ENCODE measurements at regions of chr7 and their contacts with region 1.

Region 1: DNA sequence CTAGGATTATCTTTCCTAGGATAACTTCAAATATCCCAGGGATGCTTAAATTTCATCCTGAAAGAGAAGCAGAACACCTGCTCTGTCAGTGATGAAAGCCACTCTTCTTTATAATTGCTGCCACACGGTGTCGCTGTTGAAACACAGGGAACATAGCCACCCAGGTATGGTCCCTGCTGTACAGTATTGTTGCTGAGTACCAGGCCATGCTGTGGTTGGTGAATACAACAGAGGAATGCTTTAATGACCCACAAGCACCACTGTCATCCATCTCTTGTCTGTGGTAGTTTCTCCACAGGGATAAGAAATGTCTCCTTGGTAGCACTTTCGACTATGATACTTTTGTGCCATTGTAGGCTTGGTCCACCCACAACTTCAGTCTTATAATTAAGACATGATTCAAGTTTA is 70.6 kb upstream of the STARD3NL start:
- DNase-seq: peak; percentile 64 to 83
- ATAC-seq: peak; percentile 84 to 90 (median 89)
- H3K4me3 ChIP-seq: no peak overlapping the region
- H3K4me3 Mint-ChIP-seq: no peak overlapping the region
- H3K27ac ChIP-seq: no peak overlapping the region
- H3K27ac Mint-ChIP-seq: no peak overlapping the region
- H3K4me1 ChIP-seq: no peaks in the 10 kb centered on the region
- H3K4me1 Mint-ChIP-seq: no peaks in the 10 kb centered on the region
- H3K27me3 ChIP-seq: no peaks in the 10 kb centered on the region
- H3K27me3 Mint-ChIP-seq: peaks cover 5 to 15% of the 10 kb centered on the region in 2 donors
- CTCF ChIP-seq: peak; percentile 87

Region 2: GRCh38 chr7:38160003-38160571 is 52.6 kb after region 1 on chr7:
- intact Hi-C with region 1: loop called (anchors 5 kb)
- DNase-seq: no peak
- ATAC-seq: no peak
- H3K4me3 ChIP-seq: no peak overlapping the region
- H3K4me3 Mint-ChIP-seq: no peak overlapping the region
- H3K27ac ChIP-seq: no peak overlapping the region
- H3K27ac Mint-ChIP-seq: no peak overlapping the region
- H3K4me1 ChIP-seq: no peaks in the 10 kb centered on the region
- H3K4me1 Mint-ChIP-seq: no peaks in the 10 kb centered on the region
- H3K27me3 ChIP-seq: no peaks in the 10 kb centered on the region
- H3K27me3 Mint-ChIP-seq: peaks cover 4 to 11% of the 10 kb centered on the region in 2 donors
- CTCF ChIP-seq: no peak

Region 3: DNA sequence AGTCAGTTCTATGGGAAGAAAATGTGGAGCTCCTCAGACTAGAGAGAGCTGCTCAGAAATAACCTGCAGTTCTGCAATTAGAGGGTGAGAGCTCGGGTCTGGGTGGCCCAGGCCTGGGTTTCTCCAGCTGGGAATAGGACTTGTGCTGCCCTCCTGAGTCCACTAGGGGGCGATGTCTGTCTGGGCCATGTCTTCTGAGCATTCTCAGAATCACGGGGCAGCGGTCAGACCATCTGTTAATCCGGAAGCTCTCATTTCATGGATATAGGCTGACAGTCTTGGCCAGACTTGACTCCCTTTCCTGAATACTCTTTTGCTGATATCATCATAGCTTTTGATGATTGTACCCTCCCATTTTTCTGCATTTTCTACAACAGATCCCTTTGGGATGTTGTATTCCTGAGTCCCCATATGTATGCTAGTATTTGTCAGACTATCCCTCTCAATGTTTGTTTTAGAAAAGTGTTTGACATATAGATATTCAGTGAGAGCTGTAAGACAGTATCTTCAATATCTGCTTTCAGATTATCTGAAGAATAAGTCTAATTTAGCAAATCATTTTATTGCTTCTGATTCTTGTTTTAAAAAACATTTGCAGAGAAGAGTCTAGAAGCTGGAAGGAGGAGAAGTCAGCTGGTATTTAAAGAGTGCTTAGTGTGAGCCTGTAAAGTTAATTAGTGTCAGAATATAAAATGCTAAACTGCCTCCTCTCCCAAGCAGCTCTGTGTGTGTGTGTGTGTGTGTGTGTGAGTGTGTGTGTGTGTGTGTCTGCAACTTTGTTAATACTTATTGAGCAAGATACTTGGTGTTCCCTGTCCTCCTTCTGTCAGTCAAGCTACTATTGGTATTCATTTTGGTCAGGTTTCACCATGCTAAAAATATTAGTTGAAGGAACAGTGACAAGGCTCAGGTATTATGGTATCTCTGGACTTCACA is 108.5 kb after region 1 on chr7:
- intact Hi-C with region 1: loop called (anchors 2 kb)
- DNase-seq: peak; percentile 78 to 93
- ATAC-seq: peak; percentile 58 to 86 (median 76)
- H3K4me3 ChIP-seq: no peak overlapping the region
- H3K4me3 Mint-ChIP-seq: peak overlapping the region; percentile 80
- H3K27ac ChIP-seq: peak overlapping the region; percentile 67
- H3K27ac Mint-ChIP-seq: peak overlapping the region; percentile 95 to 96
- H3K4me1 ChIP-seq: peaks cover 48% of the 10 kb centered on the region
- H3K4me1 Mint-ChIP-seq: peaks cover 52 to 60% of the 10 kb centered on the region in 2 donors
- H3K27me3 ChIP-seq: no peaks in the 10 kb centered on the region
- H3K27me3 Mint-ChIP-seq: no peaks in the 10 kb centered on the region
- CTCF ChIP-seq: peak; percentile 93

Region 4: GRCh38 chr7:38369816-38370493 is 262.5 kb after region 1 on chr7:
- intact Hi-C with region 1: loop called (anchors 1 kb)
- DNase-seq: peak; percentile 77 to 90
- ATAC-seq: peak; percentile 85 to 89 (median 86)
- H3K4me3 ChIP-seq: no peak overlapping the region
- H3K4me3 Mint-ChIP-seq: peak overlapping the region; percentile 75
- H3K27ac ChIP-seq: peak overlapping the region; percentile 68
- H3K27ac Mint-ChIP-seq: peak overlapping the region; percentile 91 to 92
- H3K4me1 ChIP-seq: peaks cover 35% of the 10 kb centered on the region
- H3K4me1 Mint-ChIP-seq: peaks cover 52 to 55% of the 10 kb centered on the region in 2 donors
- H3K27me3 ChIP-seq: no peaks in the 10 kb centered on the region
- H3K27me3 Mint-ChIP-seq: no peaks in the 10 kb centered on the region
- CTCF ChIP-seq: peak; percentile 85

Region 5: GRCh38 chr7:38660427-38661099 is 553.1 kb after region 1 on chr7:
- intact Hi-C with region 1: loop called (anchors 2 kb)
- DNase-seq: peak in 1 of 2 donors; percentile 62
- ATAC-seq: peak; percentile 75 to 86 (median 76)
- H3K4me3 ChIP-seq: no peak overlapping the region
- H3K4me3 Mint-ChIP-seq: no peak overlapping the region
- H3K27ac ChIP-seq: no peak overlapping the region
- H3K27ac Mint-ChIP-seq: no peak overlapping the region
- H3K4me1 ChIP-seq: no peaks in the 10 kb centered on the region
- H3K4me1 Mint-ChIP-seq: no peaks in the 10 kb centered on the region
- H3K27me3 ChIP-seq: no peaks in the 10 kb centered on the region
- H3K27me3 Mint-ChIP-seq: peaks cover 35 to 66% of the 10 kb centered on the region in 2 donors
- CTCF ChIP-seq: peak; percentile 87